ENCODE measurements at regions of chr22 and their contacts with region 1.

Region 1: GRCh38 chr22:32796865-32797573 is 4.5 kb upstream of the TIMP3 start:
- DNase-seq: peak; percentile 94
- H3K4me3 ChIP-seq: peak overlapping the region; percentile 38; the same call in 1 of the 2 replicates
- H3K27ac ChIP-seq: peak overlapping the region; percentile 64
- H3K4me1 ChIP-seq: peaks cover 44% of the 10 kb centered on the region
- H3K27me3 ChIP-seq: no peaks in the 10 kb centered on the region

Region 2: DNA sequence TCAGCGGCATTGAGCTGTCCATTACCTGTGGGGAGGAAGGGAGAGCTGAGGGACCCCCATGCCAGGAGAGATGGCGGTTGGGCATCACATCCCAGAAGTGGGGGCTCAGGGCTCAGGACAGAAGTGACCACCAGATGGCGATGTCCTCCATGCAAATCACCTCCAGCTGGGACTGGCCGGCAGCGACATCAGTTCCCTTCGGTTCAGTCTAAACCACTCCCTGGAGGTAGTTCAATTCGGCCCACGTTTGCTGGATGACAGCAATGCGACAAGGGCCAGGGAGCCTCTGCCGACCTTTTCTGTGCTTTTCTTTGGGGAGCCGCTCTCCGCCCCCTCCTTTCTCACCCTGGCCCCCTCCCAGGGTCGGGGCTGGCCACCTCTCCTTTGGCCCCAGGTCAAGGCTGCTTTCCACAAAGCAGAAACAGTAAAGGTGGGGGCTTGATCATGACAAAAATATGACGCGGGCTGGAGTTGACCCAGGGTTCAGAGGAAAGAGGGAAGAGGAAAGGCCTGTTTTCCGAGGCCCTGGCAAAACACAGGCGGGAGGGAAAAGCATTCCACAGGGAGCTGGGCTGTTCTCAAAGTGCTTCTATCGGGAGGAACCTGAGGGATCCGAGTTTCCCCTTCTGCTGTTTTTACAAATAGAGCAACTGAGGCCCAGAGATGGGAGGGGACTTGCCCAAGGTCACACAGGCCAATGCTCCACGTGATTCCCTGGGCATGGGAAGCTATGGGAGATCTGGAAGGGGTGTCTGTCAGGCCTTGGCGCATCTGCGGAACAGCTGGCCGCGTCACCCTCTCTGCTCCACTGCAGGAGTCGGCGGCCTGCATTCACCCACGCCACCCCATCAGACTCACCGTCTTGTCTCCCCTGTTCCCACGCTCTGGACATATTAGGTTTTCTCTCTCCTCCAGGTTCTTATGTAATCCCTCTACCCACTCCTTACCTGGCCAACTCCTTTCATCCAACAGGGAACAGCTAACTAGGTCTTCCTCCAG is 267.7 kb before region 1 on chr22:
- in situ Hi-C with region 1: loop called (anchors 5 kb)
- DNase-seq: peak; percentile 93
- H3K4me3 ChIP-seq: peak overlapping the region; percentile 49; the same call in 1 of the 2 replicates
- H3K27ac ChIP-seq: peak overlapping the region; percentile 81
- H3K4me1 ChIP-seq: peaks cover 35% of the 10 kb centered on the region
- H3K27me3 ChIP-seq: no peaks in the 10 kb centered on the region

Region 3: DNA sequence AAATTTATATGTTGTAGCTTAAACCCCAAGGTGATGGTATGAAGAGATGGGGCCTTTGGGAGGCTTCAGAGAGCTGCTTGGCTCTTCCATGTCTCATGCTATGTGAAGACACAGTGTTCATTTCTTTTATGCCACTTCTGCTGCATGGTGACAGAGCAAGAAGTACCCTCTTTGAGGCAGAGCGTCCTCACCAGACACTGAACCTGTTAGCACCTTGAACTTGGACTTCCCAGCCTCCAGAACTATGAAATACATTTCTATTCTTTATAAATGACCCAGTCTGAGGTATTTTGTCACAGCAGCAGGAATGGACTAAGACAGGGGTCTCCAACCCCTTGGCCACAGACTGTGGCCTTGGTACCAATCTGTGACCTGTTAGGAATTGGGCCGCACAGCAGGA is 142.0 kb before region 1 on chr22:
- in situ Hi-C with region 1: loop called (anchors 5 kb)
- DNase-seq: no peak
- H3K4me3 ChIP-seq: no peak overlapping the region
- H3K27ac ChIP-seq: no peak overlapping the region
- H3K4me1 ChIP-seq: peaks cover 16% of the 10 kb centered on the region
- H3K27me3 ChIP-seq: no peaks in the 10 kb centered on the region

Region 4: GRCh38 chr22:32951076-32951806 is 154.2 kb after region 1 on chr22:
- in situ Hi-C with region 1: no loop called
- DNase-seq: no peak
- H3K4me3 ChIP-seq: no peak overlapping the region
- H3K27ac ChIP-seq: no peak overlapping the region
- H3K4me1 ChIP-seq: no peaks in the 10 kb centered on the region
- H3K27me3 ChIP-seq: peaks cover 8% of the 10 kb centered on the region; the same call in 1 of the 2 replicates

Region 5: DNA sequence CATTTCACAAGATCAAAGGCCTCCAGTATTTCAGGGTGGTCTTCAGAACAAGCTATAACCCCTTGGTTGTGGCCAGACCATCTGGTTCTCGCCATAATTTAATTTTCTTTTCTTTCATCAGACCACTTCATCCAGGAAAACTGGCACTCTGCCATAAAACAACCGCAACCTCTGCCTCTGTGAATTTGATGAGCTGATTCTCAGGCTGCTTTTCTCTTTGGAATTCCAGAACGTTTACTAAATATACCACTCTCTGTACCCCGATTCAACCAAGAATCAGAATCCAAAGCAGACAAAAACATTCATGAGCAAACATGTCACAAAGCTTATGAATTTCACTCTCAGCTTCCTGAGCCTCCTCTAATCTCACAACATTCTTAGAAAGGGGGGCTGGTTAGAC is 592.9 kb after region 1 on chr22:
- in situ Hi-C with region 1: no loop called
- DNase-seq: no peak
- H3K4me3 ChIP-seq: no peak overlapping the region
- H3K27ac ChIP-seq: no peak overlapping the region
- H3K4me1 ChIP-seq: no peaks in the 10 kb centered on the region
- H3K27me3 ChIP-seq: no peaks in the 10 kb centered on the region

Measured in GM23248 (cell line).